Endothelial cell of umbilical vein (primary cell): ENCODE measurements at regions of chr19 and their contacts with region 1.

Region 1: GRCh38 chr19:56567274-56568120 is at the start of gene ZNF470:
- DNase-seq: peak; percentile 92
- H3K4me3 ChIP-seq: peak within 1 kb of the TSS; percentile 36 to 84 (median 73)
- H3K27ac ChIP-seq: no peak within 1 kb of the TSS
- H3K4me1 ChIP-seq: peaks cover 3% of the 10 kb centered on the region
- H3K27me3 ChIP-seq: no peaks in the 10 kb centered on the region
- CTCF ChIP-seq: no peak
- POLR2A ChIP-seq: no peak
- total RNA-seq, gene ZNF470: 3.9 and 4.2 TPM in 2 replicates

Region 2: GRCh38 chr19:56155124-56155687 is 412.3 kb before region 1 on chr19:
- CTCF ChIA-PET with region 1: no interaction called
- POLR2A ChIA-PET with region 1: no interaction called
- dilution Hi-C with region 1: no loop called
- intact Hi-C with region 1: loop called (anchors 2 kb)
- DNase-seq: no peak
- H3K4me3 ChIP-seq: no peak overlapping the region
- H3K27ac ChIP-seq: no peak overlapping the region
- H3K4me1 ChIP-seq: peaks cover 10% of the 10 kb centered on the region
- H3K27me3 ChIP-seq: no peaks in the 10 kb centered on the region
- CTCF ChIP-seq: peak; percentile 24 to 40
- POLR2A ChIP-seq: no peak

Region 3: GRCh38 chr19:56403764-56404704 is 163.5 kb before region 1 on chr19 and contains the start of gene ZNF583:
- CTCF ChIA-PET with region 1: no interaction called
- POLR2A ChIA-PET with region 1: no interaction called
- dilution Hi-C with region 1: no loop called
- intact Hi-C with region 1: loop called (anchors 10 kb)
- DNase-seq: peak; percentile 98
- H3K4me3 ChIP-seq: peak within 1 kb of the TSS; percentile 42 to 81 (median 53)
- H3K27ac ChIP-seq: peak within 1 kb of the TSS; percentile 57
- H3K4me1 ChIP-seq: peaks cover 8% of the 10 kb centered on the region
- H3K27me3 ChIP-seq: no peaks in the 10 kb centered on the region
- CTCF ChIP-seq: no peak
- POLR2A ChIP-seq: peak; percentile 32
- total RNA-seq, gene ZNF583: 2.4 and 4.8 TPM in 2 replicates

Region 4: DNA sequence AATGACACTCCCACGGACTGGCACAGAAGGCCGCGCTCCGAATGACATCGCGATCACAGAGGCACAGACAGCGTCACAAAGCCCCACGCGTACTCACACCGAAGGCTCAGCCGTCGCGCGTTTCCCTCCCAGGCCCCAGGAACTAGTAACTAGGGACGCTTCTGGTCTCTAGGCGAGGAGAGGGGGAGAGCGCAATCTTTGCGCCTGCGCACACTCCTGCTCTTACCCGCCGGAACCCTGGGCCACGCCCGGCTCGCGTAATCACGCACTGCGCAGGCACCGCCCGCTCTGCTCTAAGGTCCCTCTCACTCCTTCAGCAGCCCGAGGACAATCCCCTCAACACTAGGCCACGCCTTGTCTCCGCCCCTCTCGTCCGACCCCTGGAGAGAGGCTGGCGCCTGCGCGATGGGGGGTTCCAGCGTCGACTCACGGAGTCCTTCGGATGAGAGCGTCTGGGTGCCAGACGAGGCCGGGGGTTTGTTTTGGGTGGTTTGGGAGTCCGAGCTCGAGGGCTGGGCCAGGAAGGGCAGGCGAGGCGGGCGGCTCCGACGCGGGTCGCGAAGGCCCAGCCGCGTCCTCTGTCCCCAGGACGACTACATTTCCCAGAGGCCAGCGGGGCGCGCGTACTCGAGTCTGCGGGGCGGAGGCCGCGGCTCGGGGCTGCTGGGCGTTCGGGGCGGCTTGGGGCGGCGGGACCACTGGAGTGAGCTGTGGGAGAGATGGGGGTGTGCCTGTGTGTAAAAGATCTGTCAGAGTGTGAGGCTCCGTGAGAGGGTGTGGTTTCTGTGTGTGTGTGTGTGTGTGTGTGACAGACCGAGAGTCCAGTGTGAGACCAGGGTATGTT is 59.8 kb before region 1 on chr19 and contains the start of gene ZNF471:
- CTCF ChIA-PET with region 1: no interaction called
- POLR2A ChIA-PET with region 1: no interaction called
- dilution Hi-C with region 1: no loop called
- intact Hi-C with region 1: loop called (anchors 1 kb)
- DNase-seq: peak; percentile 99
- H3K4me3 ChIP-seq: peak within 1 kb of the TSS; percentile 44 to 78 (median 61)
- H3K27ac ChIP-seq: peak within 1 kb of the TSS; percentile 70
- H3K4me1 ChIP-seq: peaks cover 3% of the 10 kb centered on the region
- H3K27me3 ChIP-seq: no peaks in the 10 kb centered on the region
- CTCF ChIP-seq: no peak
- POLR2A ChIP-seq: no peak
- total RNA-seq, gene ZNF471: 2.0 and 3.1 TPM in 2 replicates

Region 5: GRCh38 chr19:56538254-56538760 is 29.2 kb before region 1 on chr19:
- CTCF ChIA-PET with region 1: no interaction called
- POLR2A ChIA-PET with region 1: no interaction called
- dilution Hi-C with region 1: no loop called
- intact Hi-C with region 1: loop called (anchors 1 kb)
- DNase-seq: peak; percentile 93
- H3K4me3 ChIP-seq: peak overlapping the region; percentile 63 to 97 (median 66)
- H3K27ac ChIP-seq: peak overlapping the region; percentile 63
- H3K4me1 ChIP-seq: peaks cover 9% of the 10 kb centered on the region
- H3K27me3 ChIP-seq: no peaks in the 10 kb centered on the region
- CTCF ChIP-seq: no peak
- POLR2A ChIP-seq: no peak

Region 6: GRCh38 chr19:56594783-56595547 is 27.5 kb after region 1 on chr19 and contains the start of gene ZNF71:
- CTCF ChIA-PET with region 1: no interaction called
- POLR2A ChIA-PET with region 1: no interaction called
- dilution Hi-C with region 1: no loop called
- intact Hi-C with region 1: loop called (anchors 1 kb)
- DNase-seq: peak; percentile 86
- H3K4me3 ChIP-seq: peak within 1 kb of the TSS; percentile 28 to 94 (median 67)
- H3K27ac ChIP-seq: no peak within 1 kb of the TSS
- H3K4me1 ChIP-seq: peaks cover 9% of the 10 kb centered on the region
- H3K27me3 ChIP-seq: no peaks in the 10 kb centered on the region
- CTCF ChIP-seq: no peak
- POLR2A ChIP-seq: no peak
- total RNA-seq, gene ZNF71: 9.6 and 9.7 TPM in 2 replicates